Activated naive CD4-positive, alpha-beta T cell treated with anti-CD3 and anti-CD28 coated beads for 36 hours (primary cell): ENCODE measurements at regions of chr6 and their contacts with region 1.

Region 1: GRCh38 chr6:28737750-28738395 is 185.9 kb downstream of the TRIM27 start:
- DNase-seq: no peak
- H3K4me3 Mint-ChIP-seq: no peak overlapping the region
- H3K27ac Mint-ChIP-seq: no peak overlapping the region
- H3K4me1 Mint-ChIP-seq: no peaks in the 10 kb centered on the region
- H3K27me3 Mint-ChIP-seq: peaks cover 70% of the 10 kb centered on the region

Region 2: GRCh38 chr6:28565823-28566526 is 171.9 kb before region 1 on chr6:
- CTCF ChIA-PET with region 1: no interaction called
- intact Hi-C with region 1: no loop called
- DNase-seq: no peak
- H3K4me3 Mint-ChIP-seq: no peak overlapping the region
- H3K27ac Mint-ChIP-seq: no peak overlapping the region
- H3K4me1 Mint-ChIP-seq: no peaks in the 10 kb centered on the region
- H3K27me3 Mint-ChIP-seq: peaks cover 42% of the 10 kb centered on the region

Region 3: DNA sequence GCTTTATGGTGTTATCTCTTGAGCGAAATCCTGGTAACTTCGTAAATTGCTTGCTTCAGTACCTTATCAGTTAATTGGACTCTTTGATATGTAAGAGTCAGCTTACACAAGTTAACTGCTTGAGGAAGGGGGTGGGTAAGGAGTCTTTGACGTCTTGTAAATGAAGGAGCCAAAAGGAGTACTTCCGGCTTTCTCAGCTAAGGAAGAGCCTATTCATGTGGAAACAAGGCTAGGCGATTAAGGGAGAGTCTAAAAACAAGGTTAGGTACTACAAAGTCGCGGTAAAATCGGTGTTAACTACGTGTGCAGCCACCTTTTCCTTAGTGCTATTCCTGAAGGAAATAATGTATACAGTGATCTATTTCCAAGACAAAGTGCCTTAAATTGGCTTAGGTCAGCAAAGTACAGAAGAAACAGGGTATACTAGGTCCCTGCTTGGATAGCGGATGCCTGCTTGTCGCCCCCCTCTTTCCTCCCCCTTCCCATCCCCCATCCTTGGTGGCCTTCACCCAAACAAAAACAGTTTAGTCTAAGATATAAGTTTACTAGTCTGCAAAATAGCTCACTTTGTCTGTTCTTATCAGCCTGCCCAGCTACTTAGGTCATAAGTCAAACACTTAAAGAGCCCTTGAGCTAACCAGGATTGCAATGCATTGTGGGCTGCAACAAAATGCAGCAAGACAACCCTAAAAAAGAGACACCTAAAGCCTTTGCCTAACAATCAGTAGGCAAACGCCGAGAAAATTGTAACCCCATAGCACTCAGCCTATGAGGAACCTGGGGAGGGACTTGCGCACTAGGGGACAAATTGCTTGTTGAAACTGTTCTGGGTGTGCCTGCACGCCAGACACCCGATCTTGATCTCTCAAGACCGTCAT is 38.6 kb after region 1 on chr6:
- CTCF ChIA-PET with region 1: no interaction called
- intact Hi-C with region 1: loop called (anchors 2 kb)
- DNase-seq: no peak
- H3K4me3 Mint-ChIP-seq: no peak overlapping the region
- H3K27ac Mint-ChIP-seq: peak overlapping the region; percentile 23
- H3K4me1 Mint-ChIP-seq: peaks cover 16% of the 10 kb centered on the region
- H3K27me3 Mint-ChIP-seq: peaks cover 91% of the 10 kb centered on the region

Region 4: GRCh38 chr6:28816909-28817807 is 79.3 kb after region 1 on chr6:
- CTCF ChIA-PET with region 1: no interaction called
- intact Hi-C with region 1: loop called (anchors 5 kb)
- DNase-seq: peak; percentile 50
- H3K4me3 Mint-ChIP-seq: peak overlapping the region; percentile 45
- H3K27ac Mint-ChIP-seq: peak overlapping the region; percentile 53
- H3K4me1 Mint-ChIP-seq: peaks cover 15% of the 10 kb centered on the region
- H3K27me3 Mint-ChIP-seq: peaks cover 72% of the 10 kb centered on the region